ENCODE measurements at regions of chr6 and their contacts with region 1.

Region 1: DNA sequence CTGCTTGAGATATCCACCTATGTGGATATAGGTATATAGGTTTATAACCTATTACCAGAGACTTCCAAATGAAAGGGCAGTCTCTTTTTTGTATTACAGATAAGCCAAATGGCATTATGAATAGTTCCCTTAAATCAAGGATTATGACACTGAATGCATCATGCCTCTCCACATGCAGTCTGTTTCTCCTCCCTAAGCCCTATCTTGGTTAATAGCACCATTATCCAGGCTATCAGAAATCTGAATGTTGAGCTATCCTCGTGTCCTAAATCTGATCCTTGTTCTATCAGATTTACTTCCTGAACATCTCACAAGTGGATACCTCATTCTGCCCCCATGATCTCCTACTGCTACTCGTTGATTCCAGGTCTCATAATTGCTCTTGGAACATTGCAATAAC is 138.0 kb downstream of the GRIK2 start:
- DNase-seq: no peak

Region 2: DNA sequence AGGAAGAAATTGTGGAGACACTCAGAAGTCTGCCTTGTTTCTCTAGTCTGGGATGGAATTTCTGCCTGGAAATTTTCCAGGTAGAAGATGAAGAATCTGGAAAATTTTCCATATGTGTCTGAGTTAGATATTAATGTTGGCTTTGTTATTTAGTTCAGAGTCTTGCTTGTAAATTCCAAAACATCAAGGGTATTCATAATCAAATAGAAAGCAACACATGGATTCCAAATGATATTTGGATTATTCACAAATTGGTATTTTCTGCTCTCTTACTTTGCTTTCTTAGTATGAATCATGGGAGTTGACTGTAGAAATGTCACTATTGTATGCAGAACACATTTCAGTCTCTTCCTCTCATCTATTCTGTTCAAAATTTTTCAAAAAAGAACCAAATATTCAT is 22.0 kb before region 1 on chr6:
- intact Hi-C with region 1: loop called (anchors 2 kb)
- DNase-seq: no peak

Region 3: DNA sequence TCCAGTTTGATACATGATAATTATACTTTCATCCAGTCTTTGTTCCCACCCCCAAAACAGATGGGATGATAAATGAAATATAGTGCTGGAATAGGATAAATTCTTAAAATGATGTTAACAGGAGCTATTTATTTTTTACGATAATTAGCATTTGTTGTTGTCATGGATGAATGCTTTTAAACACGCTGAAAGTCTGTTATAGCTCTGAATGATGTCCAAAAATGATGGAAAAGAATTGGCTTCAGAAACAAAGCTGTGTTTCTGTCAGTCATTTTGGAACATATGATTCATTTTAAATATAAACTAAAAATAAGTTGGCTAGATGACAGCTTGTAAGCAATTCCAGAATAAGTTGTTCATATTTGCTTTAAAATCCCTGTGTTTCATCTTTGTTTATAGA is 99.4 kb after region 1 on chr6:
- intact Hi-C with region 1: no loop called
- DNase-seq: no peak